ENCODE measurements at regions of chrX and their contacts with region 1.

Region 1: GRCh38 chrX:110133735-110134370 is 130.9 kb downstream of the TMEM164 start:
- DNase-seq: no peak
- H3K4me3 Mint-ChIP-seq: no peak overlapping the region
- H3K27ac Mint-ChIP-seq: no peak overlapping the region
- H3K4me1 Mint-ChIP-seq: peaks cover 18% of the 10 kb centered on the region
- H3K27me3 Mint-ChIP-seq: no peaks in the 10 kb centered on the region

Region 2: DNA sequence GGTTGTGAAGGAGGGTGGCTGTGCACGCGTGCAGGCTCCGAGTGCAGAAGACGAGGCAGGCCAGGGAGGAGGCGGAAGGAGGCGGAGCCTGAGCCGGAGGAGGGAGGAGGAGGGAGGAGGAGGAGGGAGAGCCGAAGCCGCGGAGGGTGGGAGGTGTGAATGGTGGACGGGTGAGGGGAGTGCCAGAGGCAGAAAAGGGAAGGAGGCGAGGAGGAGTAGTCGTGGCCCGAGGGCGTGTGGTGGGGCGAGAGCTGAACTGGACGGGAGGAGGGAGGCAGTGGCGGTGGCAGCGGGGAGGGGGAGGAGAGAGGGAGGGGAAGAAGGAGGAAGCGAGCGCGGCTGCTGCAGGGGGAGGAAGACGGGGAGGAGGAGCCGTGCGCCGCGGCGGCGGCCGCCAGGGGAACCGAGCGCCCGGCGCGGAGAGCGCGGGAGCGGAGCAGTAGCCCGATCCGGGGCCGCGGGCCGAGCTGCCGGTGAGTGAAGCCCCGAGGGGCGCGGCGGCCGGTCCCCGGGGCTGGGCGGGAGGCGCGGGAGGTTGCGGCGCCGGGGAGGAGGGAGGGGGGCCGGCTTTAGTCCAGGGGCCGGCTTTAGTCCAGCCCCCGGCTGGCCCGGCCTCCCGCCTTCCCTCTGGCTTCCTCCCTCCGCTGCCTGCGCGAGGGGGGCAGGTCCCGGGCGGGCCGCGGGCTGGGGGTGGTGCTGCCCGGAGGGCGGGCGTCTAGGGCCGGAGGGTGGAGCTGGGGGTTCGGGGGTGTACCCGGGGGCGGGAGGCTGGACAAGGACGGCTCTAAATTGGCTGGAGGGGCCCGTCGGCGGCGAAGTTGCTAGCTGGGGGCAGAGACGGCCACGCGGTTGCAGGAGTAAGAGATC is 131.3 kb before region 1 on chrX and contains the start of gene TMEM164:
- CTCF ChIA-PET with region 1: interaction called, 4 read pairs
- intact Hi-C with region 1: loop called (anchors 2 kb)
- DNase-seq: peak; percentile 83
- H3K4me3 Mint-ChIP-seq: peak within 1 kb of the TSS; percentile 83
- H3K27ac Mint-ChIP-seq: peak within 1 kb of the TSS; percentile 81
- H3K4me1 Mint-ChIP-seq: peaks cover 31% of the 10 kb centered on the region
- H3K27me3 Mint-ChIP-seq: no peaks in the 10 kb centered on the region
- total RNA-seq, gene TMEM164: 11.9 to 12.0 TPM

Region 3: GRCh38 chrX:110060846-110061537 is 72.9 kb before region 1 on chrX:
- CTCF ChIA-PET with region 1: no interaction called
- intact Hi-C with region 1: no loop called
- DNase-seq: no peak
- H3K4me3 Mint-ChIP-seq: no peak overlapping the region
- H3K27ac Mint-ChIP-seq: no peak overlapping the region
- H3K4me1 Mint-ChIP-seq: peaks cover 11% of the 10 kb centered on the region
- H3K27me3 Mint-ChIP-seq: no peaks in the 10 kb centered on the region

Region 4: GRCh38 chrX:110123331-110123782 is 10.5 kb before region 1 on chrX:
- CTCF ChIA-PET with region 1: no interaction called
- intact Hi-C with region 1: no loop called
- DNase-seq: no peak
- H3K4me3 Mint-ChIP-seq: no peak overlapping the region
- H3K27ac Mint-ChIP-seq: no peak overlapping the region
- H3K4me1 Mint-ChIP-seq: no peaks in the 10 kb centered on the region
- H3K27me3 Mint-ChIP-seq: no peaks in the 10 kb centered on the region

Region 5: DNA sequence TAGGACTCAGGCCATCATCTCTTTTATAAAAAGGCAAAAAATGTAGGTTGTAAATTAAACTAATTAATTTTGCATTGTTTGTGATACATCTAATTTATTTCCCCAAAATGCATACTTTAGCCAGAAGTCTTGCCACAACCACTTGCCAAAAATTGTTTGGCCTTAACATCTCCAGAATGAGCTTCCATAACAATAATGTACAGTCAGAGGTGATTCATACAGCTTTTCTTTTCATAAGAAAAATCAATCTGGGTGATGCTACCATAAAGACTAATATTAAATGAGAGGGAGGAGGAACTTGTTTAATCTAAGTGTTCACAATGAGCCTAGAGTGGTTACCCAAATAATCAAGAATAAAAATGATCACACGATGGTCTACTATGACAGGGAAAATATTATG is 124.7 kb after region 1 on chrX:
- CTCF ChIA-PET with region 1: no interaction called
- intact Hi-C with region 1: no loop called
- DNase-seq: no peak
- H3K4me3 Mint-ChIP-seq: no peak overlapping the region
- H3K27ac Mint-ChIP-seq: no peak overlapping the region
- H3K4me1 Mint-ChIP-seq: peaks cover 13% of the 10 kb centered on the region
- H3K27me3 Mint-ChIP-seq: no peaks in the 10 kb centered on the region